ENCODE measurements at regions of chr9 and their contacts with region 1.

Region 1: DNA sequence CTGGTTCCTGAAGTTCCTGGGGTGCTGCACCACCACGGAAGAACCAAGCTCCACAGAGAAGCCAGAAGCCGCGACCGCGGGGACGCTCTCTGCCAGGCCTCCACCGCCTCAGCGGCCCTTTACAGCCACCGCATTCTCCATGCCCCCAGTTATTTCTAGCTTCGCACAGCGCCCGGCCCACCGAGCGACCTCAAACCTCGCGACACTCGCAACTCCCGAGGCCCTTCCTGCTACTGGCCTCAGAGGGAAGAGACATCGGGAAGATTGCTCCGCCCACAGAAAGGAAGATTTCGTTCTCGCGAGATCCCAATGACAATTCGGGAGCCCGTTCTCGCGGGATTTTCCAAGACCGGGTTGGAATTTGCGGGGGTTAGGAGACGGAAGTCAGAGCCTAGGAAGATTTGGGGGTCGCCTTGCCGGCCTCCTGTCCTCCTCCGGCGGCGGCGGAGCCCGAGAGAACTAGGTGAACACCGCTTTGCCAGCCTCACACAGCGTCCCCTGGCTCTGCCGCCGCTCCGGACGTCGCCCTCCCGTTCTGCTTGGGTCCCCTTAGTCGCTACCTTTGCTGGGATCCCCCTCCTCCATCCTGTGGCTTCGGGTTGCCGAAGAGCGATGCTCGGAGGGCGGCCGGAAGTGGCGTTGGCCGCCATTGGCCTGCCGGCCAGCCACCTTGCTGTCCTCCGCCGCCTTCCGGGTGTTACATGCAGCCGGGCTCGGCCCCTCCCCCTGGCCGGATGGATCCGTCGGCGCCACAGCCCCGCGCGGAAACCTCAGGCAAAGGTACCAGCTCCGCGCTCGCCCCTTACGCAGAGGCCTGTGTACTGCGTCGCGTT is at the start of gene ERCC6L2:
- DNase-seq: peak; percentile 98
- ATAC-seq: peak; percentile 95
- H3K4me3 ChIP-seq: no peak within 1 kb of the TSS; a peak in 3 of 6 replicates
- H3K27ac ChIP-seq: no peak within 1 kb of the TSS
- H3K4me1 ChIP-seq: peaks cover 21% of the 10 kb centered on the region
- H3K27me3 ChIP-seq: no peaks in the 10 kb centered on the region; a peak in 1 of 5 replicates
- CTCF ChIP-seq: peak; percentile 42
- EP300 ChIP-seq: peak in 1 of 2 experiments; percentile 17; a peak in 2 of 4 replicates
- POLR2A ChIP-seq: peak; percentile 91 to 95
- RAD21 ChIP-seq: peak; percentile 71; the same call in 1 of the 2 replicates
- total RNA-seq, gene ERCC6L2: 45.9 and 63.0 TPM in 2 replicates

Region 2: GRCh38 chr9:95425910-95426551 is 449.5 kb before region 1 on chr9:
- CTCF ChIA-PET with region 1: no interaction called
- POLR2A ChIA-PET with region 1: no interaction called
- in situ Hi-C with region 1: no loop called
- intact Hi-C with region 1: loop called (anchors 1 kb)
- DNase-seq: peak; percentile 21
- ATAC-seq: peak; percentile 67
- H3K4me3 ChIP-seq: peak overlapping the region; percentile 67 to 89 (median 75)
- H3K27ac ChIP-seq: peak overlapping the region; percentile 85
- H3K4me1 ChIP-seq: peaks cover 25% of the 10 kb centered on the region
- H3K27me3 ChIP-seq: no peaks in the 10 kb centered on the region; a peak in 1 of 5 replicates
- CTCF ChIP-seq: no peak
- EP300 ChIP-seq: no peak
- POLR2A ChIP-seq: 0 out of 4 replicates have a peak, but pooled peaks of 1 of the 2 experiments have one; percentile 30
- RAD21 ChIP-seq: no peak

Region 3: GRCh38 chr9:95510709-95511615 is 364.6 kb before region 1 on chr9:
- CTCF ChIA-PET with region 1: no interaction called
- POLR2A ChIA-PET with region 1: interaction called, 5 read pairs
- in situ Hi-C with region 1: no loop called
- intact Hi-C with region 1: loop called (anchors 2 kb)
- DNase-seq: peak; percentile 85
- ATAC-seq: peak; percentile 83
- H3K4me3 ChIP-seq: peak overlapping the region; percentile 80 to 93 (median 82)
- H3K27ac ChIP-seq: peak overlapping the region; percentile 88
- H3K4me1 ChIP-seq: peaks cover 34% of the 10 kb centered on the region
- H3K27me3 ChIP-seq: no peaks in the 10 kb centered on the region; a peak in 2 of 5 replicates
- CTCF ChIP-seq: no peak
- EP300 ChIP-seq: no peak
- POLR2A ChIP-seq: no peak; a peak in 1 of 4 replicates
- RAD21 ChIP-seq: 0 out of 2 replicates have a peak, but pooled peaks have one; percentile 27

Region 4: DNA sequence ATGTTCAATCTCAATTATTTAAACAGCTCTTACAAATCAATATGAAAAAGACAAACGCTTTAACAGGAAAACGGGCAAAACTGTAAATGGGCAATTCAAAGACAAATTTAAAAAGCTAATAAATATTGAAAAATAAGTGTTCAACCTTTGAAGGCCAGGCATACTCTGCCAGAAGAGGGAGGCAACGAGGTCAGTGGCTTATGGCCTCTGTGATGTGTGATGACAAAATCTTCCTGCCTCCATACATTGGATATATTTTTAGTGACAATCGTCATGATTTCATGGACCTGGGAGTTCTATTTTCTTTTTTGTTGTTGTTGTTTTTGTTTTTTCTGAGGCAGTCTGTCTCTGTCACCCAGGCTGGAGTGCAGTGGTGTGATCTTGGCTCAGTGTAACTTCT is 131.2 kb before region 1 on chr9:
- CTCF ChIA-PET with region 1: no interaction called
- POLR2A ChIA-PET with region 1: interaction called, 6 read pairs
- in situ Hi-C with region 1: no loop called
- intact Hi-C with region 1: loop called (anchors 10 kb)
- DNase-seq: no peak
- ATAC-seq: no peak
- H3K4me3 ChIP-seq: no peak overlapping the region
- H3K27ac ChIP-seq: no peak overlapping the region
- H3K4me1 ChIP-seq: peaks cover 35% of the 10 kb centered on the region
- H3K27me3 ChIP-seq: no peaks in the 10 kb centered on the region; a peak in 2 of 5 replicates
- CTCF ChIP-seq: peak; percentile 20; the same call in 1 of the 2 replicates
- EP300 ChIP-seq: no peak
- POLR2A ChIP-seq: no peak
- RAD21 ChIP-seq: no peak

Region 5: DNA sequence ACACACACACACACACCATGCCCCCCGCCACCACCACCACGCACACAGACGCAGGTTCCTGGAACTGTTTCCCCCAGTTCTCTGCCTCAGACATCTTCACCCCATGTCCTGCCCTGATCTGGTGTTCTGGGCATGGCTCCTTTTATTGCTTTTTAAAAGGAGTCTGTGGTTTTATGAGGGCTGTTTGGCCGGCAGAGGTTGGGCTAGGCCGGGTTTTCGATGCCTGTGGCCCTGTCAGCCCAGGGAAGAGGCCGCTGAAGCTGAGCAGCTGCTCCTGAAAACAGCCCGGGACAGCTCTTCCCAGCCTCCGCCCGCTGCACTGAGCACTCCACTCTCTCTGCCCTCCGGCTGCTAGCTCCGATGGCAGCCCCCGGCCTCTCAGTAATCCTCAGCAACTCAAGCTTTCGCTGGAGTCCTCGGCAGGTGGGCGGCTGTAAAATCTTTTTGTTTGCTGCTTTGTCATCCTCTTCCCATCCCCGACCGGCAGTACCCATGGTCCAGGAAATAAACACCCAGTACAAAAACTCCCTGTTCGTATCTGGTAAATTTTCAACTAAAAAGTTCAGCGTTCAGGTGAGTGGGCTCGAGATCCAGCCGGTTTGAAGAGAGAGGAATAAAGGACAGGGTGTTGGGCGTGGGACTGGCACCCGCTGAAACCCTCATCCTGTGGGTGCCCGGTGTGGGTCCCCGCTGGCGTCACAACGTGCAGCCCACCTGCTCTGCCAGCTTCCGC is 103.0 kb before region 1 on chr9:
- CTCF ChIA-PET with region 1: no interaction called
- POLR2A ChIA-PET with region 1: interaction called, 9 read pairs
- in situ Hi-C with region 1: no loop called
- intact Hi-C with region 1: loop called (anchors 5 kb)
- DNase-seq: peak; percentile 49
- ATAC-seq: peak; percentile 92
- H3K4me3 ChIP-seq: peak overlapping the region; percentile 55 to 73 (median 68)
- H3K27ac ChIP-seq: peak overlapping the region; percentile 79
- H3K4me1 ChIP-seq: peaks cover 51% of the 10 kb centered on the region
- H3K27me3 ChIP-seq: no peaks in the 10 kb centered on the region
- CTCF ChIP-seq: no peak
- EP300 ChIP-seq: peak in 1 of 2 experiments; percentile 23; a peak in 1 of 4 replicates
- POLR2A ChIP-seq: peak in 1 of 2 experiments; percentile 49; a peak in 2 of 4 replicates
- RAD21 ChIP-seq: no peak

Region 6: DNA sequence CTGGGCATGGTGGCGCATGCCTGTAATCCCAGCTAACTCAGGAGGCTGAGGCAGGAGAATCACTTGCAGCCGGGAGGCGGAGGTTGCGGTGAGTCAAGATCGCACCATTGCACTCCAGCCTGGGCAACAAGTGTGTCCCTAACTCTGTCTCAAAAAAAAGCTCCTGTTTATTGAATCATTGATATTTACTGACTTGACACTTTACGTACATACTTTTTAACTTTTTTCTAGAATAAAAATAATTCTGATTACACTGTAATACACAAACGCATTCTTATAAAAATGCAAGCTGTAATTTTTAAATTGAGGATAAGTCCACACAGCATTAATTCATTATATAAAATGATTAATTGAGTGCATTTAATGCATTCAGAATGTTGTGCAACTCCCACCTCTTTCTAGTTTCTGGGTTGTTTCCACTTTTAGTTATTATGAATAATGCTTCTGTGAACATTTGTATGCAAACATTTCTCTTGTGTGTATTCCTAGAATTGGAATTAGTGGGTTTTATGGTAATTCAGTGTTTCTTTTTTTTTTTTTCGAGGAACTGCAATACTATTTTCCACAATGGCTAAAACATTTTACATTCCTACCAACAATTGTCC is 15.6 kb after region 1 on chr9:
- CTCF ChIA-PET with region 1: no interaction called
- POLR2A ChIA-PET with region 1: interaction called, 17 read pairs
- in situ Hi-C with region 1: no loop called
- intact Hi-C with region 1: no loop called
- DNase-seq: no peak
- ATAC-seq: no peak
- H3K4me3 ChIP-seq: no peak overlapping the region
- H3K27ac ChIP-seq: no peak overlapping the region
- H3K4me1 ChIP-seq: no peaks in the 10 kb centered on the region
- H3K27me3 ChIP-seq: no peaks in the 10 kb centered on the region
- CTCF ChIP-seq: no peak
- EP300 ChIP-seq: no peak
- POLR2A ChIP-seq: no peak
- RAD21 ChIP-seq: no peak

Region 7: GRCh38 chr9:95923794-95924193 is 48.3 kb after region 1 on chr9:
- CTCF ChIA-PET with region 1: no interaction called
- POLR2A ChIA-PET with region 1: no interaction called
- in situ Hi-C with region 1: no loop called
- intact Hi-C with region 1: no loop called
- DNase-seq: peak; percentile 65
- ATAC-seq: peak; percentile 99
- H3K4me3 ChIP-seq: no peak overlapping the region
- H3K27ac ChIP-seq: peak overlapping the region; percentile 60
- H3K4me1 ChIP-seq: peaks cover 17% of the 10 kb centered on the region
- H3K27me3 ChIP-seq: no peaks in the 10 kb centered on the region
- CTCF ChIP-seq: no peak
- EP300 ChIP-seq: peak in 1 of 2 experiments; percentile 63; a peak in 2 of 4 replicates
- POLR2A ChIP-seq: no peak
- RAD21 ChIP-seq: no peak

Region 8: DNA sequence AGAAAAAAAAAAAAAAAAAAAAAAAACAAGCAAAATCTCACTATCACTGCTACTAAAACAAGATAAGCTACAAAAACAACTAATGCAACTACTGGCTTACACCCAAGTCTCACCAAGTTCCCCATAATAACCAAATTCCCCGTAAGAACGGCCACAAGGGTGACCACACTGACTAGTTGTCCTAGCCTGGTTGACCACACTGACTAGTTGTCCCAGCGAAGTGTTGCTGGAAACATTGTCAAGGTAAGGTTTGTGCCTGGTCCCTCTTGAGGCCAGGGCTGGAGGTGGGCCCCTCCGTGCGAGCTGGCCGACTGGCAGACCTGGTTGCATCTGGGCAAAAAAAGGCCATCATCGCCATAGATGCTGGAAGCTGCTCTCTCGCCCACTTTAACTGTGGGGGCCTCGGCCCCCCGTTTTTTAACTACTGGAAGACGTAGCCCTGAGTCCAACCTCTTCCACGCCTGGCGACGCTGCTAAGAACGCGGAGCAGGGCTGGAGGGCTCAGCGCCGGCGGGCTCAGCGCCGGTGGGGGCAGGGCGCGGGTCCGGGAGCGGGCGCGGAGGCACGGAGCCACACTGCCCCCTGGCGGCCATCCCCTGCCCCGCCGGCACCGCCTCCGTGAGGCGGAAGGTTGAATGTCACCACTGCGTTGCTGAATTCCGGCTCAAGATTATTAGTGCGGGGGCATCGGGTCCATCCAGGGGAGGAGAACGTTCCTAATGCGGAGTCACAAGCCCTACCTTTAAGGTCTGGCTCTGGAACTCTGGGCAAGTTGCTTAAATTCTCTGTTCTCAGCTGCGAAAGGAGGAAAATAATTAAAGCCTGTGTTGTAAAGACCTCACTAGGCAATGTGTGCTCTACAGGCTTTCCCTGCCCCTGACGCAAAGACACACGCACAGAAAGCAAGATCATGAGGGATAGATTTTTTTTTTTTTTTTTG is 342.5 kb after region 1 on chr9:
- CTCF ChIA-PET with region 1: no interaction called
- POLR2A ChIA-PET with region 1: interaction called, 3 read pairs
- in situ Hi-C with region 1: no loop called
- intact Hi-C with region 1: loop called (anchors 5 kb)
- DNase-seq: peak; percentile 28
- ATAC-seq: peak; percentile 93
- H3K4me3 ChIP-seq: peak overlapping the region; percentile 35 to 72 (median 39)
- H3K27ac ChIP-seq: no peak overlapping the region
- H3K4me1 ChIP-seq: peaks cover 10% of the 10 kb centered on the region
- H3K27me3 ChIP-seq: peaks cover 0 to 38% of the 10 kb centered on the region in 2 experiments; a peak in 3 of 5 replicates
- CTCF ChIP-seq: peak; percentile 90
- EP300 ChIP-seq: no peak
- POLR2A ChIP-seq: no peak
- RAD21 ChIP-seq: peak; percentile 98

Measured in HepG2 (cell line).